CD4-positive, alpha-beta memory T cell (primary cell): ENCODE measurements at regions of chr4 and their contacts with region 1.

Region 1: GRCh38 chr4:17576932-17577665 is at the start of gene LAP3:
- DNase-seq: peak; percentile 98 to 99 (median 98)
- H3K4me3 ChIP-seq: peak within 1 kb of the TSS; percentile 79 to 97
- H3K4me3 Mint-ChIP-seq: peak within 1 kb of the TSS; percentile 88 to 94 (median 94)
- H3K27ac ChIP-seq: peak within 1 kb of the TSS; percentile 91
- H3K27ac Mint-ChIP-seq: peak within 1 kb of the TSS; percentile 93 to 99 (median 98)
- H3K4me1 ChIP-seq: peaks cover 23% of the 10 kb centered on the region
- H3K4me1 Mint-ChIP-seq: peaks cover 13 to 31% (median 23%) of the 10 kb centered on the region in 4 donors
- H3K27me3 ChIP-seq: no peaks in the 10 kb centered on the region
- H3K27me3 Mint-ChIP-seq: no peaks in the 10 kb centered on the region
- total RNA-seq, gene LAP3: 25.6 to 27.6 TPM

Region 2: GRCh38 chr4:15756361-15756861 is 1820.7 kb before region 1 on chr4:
- CTCF ChIA-PET with region 1: no interaction called
- POLR2A ChIA-PET with region 1: no interaction called
- intact Hi-C with region 1: loop called (anchors 10 kb)
- DNase-seq: peak; percentile 85 to 93 (median 86)
- H3K4me3 ChIP-seq: peak overlapping the region in 1 of 2 donors; percentile 46
- H3K4me3 Mint-ChIP-seq: peak overlapping the region; percentile 46 to 81 (median 74)
- H3K27ac ChIP-seq: peak overlapping the region; percentile 19
- H3K27ac Mint-ChIP-seq: peak overlapping the region; percentile 73 to 95 (median 89)
- H3K4me1 ChIP-seq: peaks cover 45% of the 10 kb centered on the region
- H3K4me1 Mint-ChIP-seq: peaks cover 40 to 49% (median 42%) of the 10 kb centered on the region in 4 donors
- H3K27me3 ChIP-seq: no peaks in the 10 kb centered on the region
- H3K27me3 Mint-ChIP-seq: no peaks in the 10 kb centered on the region

Region 3: DNA sequence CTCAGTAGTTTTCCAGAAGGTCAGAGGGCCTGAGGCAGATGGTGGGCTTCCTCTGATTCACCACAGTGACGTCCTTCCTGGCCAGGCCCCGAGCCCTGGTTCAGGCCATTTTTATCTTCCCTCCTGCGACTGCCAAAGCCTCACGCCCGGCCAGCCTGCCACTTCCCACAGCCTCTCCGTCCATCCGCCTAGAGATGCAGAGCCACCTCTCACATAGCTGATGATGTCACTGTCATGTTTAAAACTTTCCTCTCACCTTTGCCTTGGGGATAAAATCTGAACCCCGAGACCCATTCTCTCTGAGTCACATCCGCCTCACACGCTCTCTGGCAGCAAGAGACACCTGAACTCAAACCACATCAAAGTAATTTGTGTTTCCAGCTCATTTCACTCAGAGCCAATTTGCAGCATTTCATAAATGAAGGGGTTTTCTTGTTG is 240.6 kb before region 1 on chr4:
- CTCF ChIA-PET with region 1: no interaction called
- POLR2A ChIA-PET with region 1: no interaction called
- intact Hi-C with region 1: loop called (anchors 2 kb)
- DNase-seq: peak; percentile 81 to 94 (median 83)
- H3K4me3 ChIP-seq: no peak overlapping the region
- H3K4me3 Mint-ChIP-seq: peak overlapping the region; percentile 43 to 85 (median 68)
- H3K27ac ChIP-seq: peak overlapping the region; percentile 31
- H3K27ac Mint-ChIP-seq: peak overlapping the region; percentile 90 to 96 (median 93)
- H3K4me1 ChIP-seq: peaks cover 23% of the 10 kb centered on the region
- H3K4me1 Mint-ChIP-seq: peaks cover 15 to 29% (median 22%) of the 10 kb centered on the region in 4 donors
- H3K27me3 ChIP-seq: no peaks in the 10 kb centered on the region
- H3K27me3 Mint-ChIP-seq: peaks cover 0 to 1% of the 10 kb centered on the region in 2 donors

Region 4: DNA sequence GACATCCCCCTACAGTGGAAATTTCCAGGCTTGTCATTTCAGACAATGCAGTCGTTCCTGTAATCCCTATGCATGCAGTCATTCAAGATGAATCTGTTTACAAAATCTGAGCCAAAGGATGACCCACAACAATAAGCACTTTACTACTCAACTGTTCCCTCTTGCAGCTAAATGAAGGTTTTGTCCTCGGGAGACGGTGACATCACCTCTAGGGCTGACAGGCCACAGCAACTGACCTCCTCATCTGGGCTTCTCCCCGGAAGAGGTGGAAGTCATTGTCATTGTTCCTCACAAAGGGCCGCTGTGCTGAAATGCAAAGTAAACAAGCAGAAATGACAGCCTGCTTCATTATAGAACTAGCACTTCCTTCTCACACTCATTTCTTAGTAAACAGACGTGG is 32.9 kb before region 1 on chr4:
- CTCF ChIA-PET with region 1: interaction called, 7 read pairs
- POLR2A ChIA-PET with region 1: no interaction called
- intact Hi-C with region 1: loop called (anchors 1 kb)
- DNase-seq: no peak
- H3K4me3 ChIP-seq: no peak overlapping the region
- H3K4me3 Mint-ChIP-seq: no peak overlapping the region
- H3K27ac ChIP-seq: no peak overlapping the region
- H3K27ac Mint-ChIP-seq: no peak overlapping the region
- H3K4me1 ChIP-seq: no peaks in the 10 kb centered on the region
- H3K4me1 Mint-ChIP-seq: peaks cover 0 to 5% (median 1%) of the 10 kb centered on the region in 4 donors
- H3K27me3 ChIP-seq: no peaks in the 10 kb centered on the region
- H3K27me3 Mint-ChIP-seq: peaks cover 3 to 12% of the 10 kb centered on the region in 2 donors

Region 5: GRCh38 chr4:18021722-18022571 is 444.8 kb after region 1 on chr4 and contains the start of gene LCORL:
- CTCF ChIA-PET with region 1: no interaction called
- POLR2A ChIA-PET with region 1: no interaction called
- intact Hi-C with region 1: loop called (anchors 1 kb)
- DNase-seq: peak; percentile 84 to 91 (median 87)
- H3K4me3 ChIP-seq: peak within 1 kb of the TSS; percentile 68 to 87
- H3K4me3 Mint-ChIP-seq: peak within 1 kb of the TSS; percentile 92 to 98 (median 96)
- H3K27ac ChIP-seq: peak within 1 kb of the TSS; percentile 61
- H3K27ac Mint-ChIP-seq: peak within 1 kb of the TSS; percentile 86 to 97 (median 90)
- H3K4me1 ChIP-seq: peaks cover 24% of the 10 kb centered on the region
- H3K4me1 Mint-ChIP-seq: peaks cover 12 to 33% (median 20%) of the 10 kb centered on the region in 4 donors
- H3K27me3 ChIP-seq: peaks cover 4% of the 10 kb centered on the region
- H3K27me3 Mint-ChIP-seq: peaks cover 6 to 26% of the 10 kb centered on the region in 2 donors
- total RNA-seq, gene LCORL: 11.3 to 14.5 TPM